ENCODE measurements at regions of chr16 and their contacts with region 1.

Region 1: DNA sequence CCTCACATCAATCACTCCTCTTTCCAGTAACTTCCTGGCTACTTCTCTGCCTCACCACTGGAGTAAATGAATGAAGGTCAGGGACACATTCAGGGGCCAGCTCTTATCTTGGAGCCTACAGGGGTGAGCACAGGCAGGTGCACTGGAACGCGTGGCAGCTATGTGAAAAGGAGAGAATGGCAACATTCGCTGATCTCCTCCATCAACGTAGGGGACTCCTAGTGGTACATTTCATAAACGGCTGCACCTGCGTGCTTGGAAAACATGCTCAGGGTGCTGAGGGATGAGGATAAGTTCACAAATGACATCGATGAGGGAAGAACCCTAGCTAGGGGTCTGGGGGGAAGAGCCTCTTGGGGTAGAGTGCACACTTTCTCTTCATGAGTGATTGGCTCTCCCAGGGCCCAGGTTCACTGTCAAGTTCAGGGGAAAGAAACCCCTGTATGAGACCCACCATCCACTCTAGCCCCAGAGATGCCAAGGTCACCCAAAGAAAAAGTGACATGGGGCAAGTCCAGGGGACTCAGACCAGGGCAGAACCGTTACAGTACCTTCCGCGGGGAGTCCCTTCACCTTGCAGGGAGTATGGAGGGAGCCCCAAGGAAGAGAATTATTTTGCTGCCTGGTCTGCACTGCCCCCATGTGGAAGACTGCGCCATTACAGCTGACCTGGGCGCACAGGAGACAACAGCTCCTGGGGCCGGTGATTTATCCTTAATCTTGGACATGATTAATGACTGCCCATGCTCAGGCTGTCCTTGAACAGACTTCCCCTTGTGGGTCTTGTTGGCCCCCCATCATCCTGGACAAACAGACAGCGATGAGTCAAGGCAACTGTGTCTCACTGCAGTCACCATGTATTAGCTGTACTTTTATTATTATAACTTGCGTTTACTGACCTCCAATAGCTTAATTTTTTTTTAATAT is 30.1 kb downstream of the VAC14 start:
- DNase-seq: no peak
- ATAC-seq: peak; percentile 97
- H3K4me3 ChIP-seq: no peak overlapping the region
- H3K27ac ChIP-seq: no peak overlapping the region
- H3K4me1 ChIP-seq: no peaks in the 10 kb centered on the region
- H3K27me3 ChIP-seq: no peaks in the 10 kb centered on the region
- CTCF ChIP-seq: peak; percentile 77 to 97 (median 91)
- EP300 ChIP-seq: no peak
- POLR2A ChIP-seq: no peak
- RAD21 ChIP-seq: peak; percentile 78

Region 2: GRCh38 chr16:70653809-70654771 is 116.8 kb before region 1 on chr16:
- CTCF ChIA-PET with region 1: interaction called, 18 read pairs
- POLR2A ChIA-PET with region 1: no interaction called
- RAD21 ChIA-PET with region 1: interaction called, 4 read pairs
- SMC1A ChIA-PET with region 1: interaction called, 6 read pairs
- in situ Hi-C with region 1: no loop called
- intact Hi-C with region 1: no loop called
- DNase-seq: peak; percentile 44
- ATAC-seq: peak; percentile 86
- H3K4me3 ChIP-seq: no peak overlapping the region
- H3K27ac ChIP-seq: no peak overlapping the region
- H3K4me1 ChIP-seq: no peaks in the 10 kb centered on the region
- H3K27me3 ChIP-seq: no peaks in the 10 kb centered on the region
- CTCF ChIP-seq: peak; percentile 80 to 97 (median 96); a peak in 5 of 6 replicates
- EP300 ChIP-seq: no peak
- POLR2A ChIP-seq: no peak
- RAD21 ChIP-seq: peak; percentile 93

Region 3: GRCh38 chr16:70737377-70738082 is 33.4 kb before region 1 on chr16:
- CTCF ChIA-PET with region 1: interaction called, 18 read pairs
- POLR2A ChIA-PET with region 1: interaction called, 4 read pairs
- RAD21 ChIA-PET with region 1: interaction called, 3 read pairs
- SMC1A ChIA-PET with region 1: interaction called, 5 read pairs
- in situ Hi-C with region 1: no loop called
- intact Hi-C with region 1: no loop called
- DNase-seq: peak; percentile 81
- ATAC-seq: peak; percentile 95
- H3K4me3 ChIP-seq: no peak overlapping the region
- H3K27ac ChIP-seq: peak overlapping the region; percentile 71
- H3K4me1 ChIP-seq: peaks cover 22% of the 10 kb centered on the region
- H3K27me3 ChIP-seq: no peaks in the 10 kb centered on the region
- CTCF ChIP-seq: no peak
- EP300 ChIP-seq: peak; percentile 73 to 83; a peak in 3 of 4 replicates
- POLR2A ChIP-seq: peak; percentile 64
- RAD21 ChIP-seq: no peak

Region 4: GRCh38 chr16:70784692-70785555 is 14.0 kb after region 1 on chr16:
- CTCF ChIA-PET with region 1: interaction called, 11 read pairs
- POLR2A ChIA-PET with region 1: interaction called, 7 read pairs
- RAD21 ChIA-PET with region 1: interaction called, 4 read pairs
- SMC1A ChIA-PET with region 1: interaction called, 4 read pairs
- in situ Hi-C with region 1: no loop called
- intact Hi-C with region 1: no loop called
- DNase-seq: no peak
- ATAC-seq: no peak
- H3K4me3 ChIP-seq: no peak overlapping the region
- H3K27ac ChIP-seq: no peak overlapping the region
- H3K4me1 ChIP-seq: no peaks in the 10 kb centered on the region
- H3K27me3 ChIP-seq: no peaks in the 10 kb centered on the region
- CTCF ChIP-seq: no peak
- EP300 ChIP-seq: no peak
- POLR2A ChIP-seq: no peak
- RAD21 ChIP-seq: no peak

Region 5: DNA sequence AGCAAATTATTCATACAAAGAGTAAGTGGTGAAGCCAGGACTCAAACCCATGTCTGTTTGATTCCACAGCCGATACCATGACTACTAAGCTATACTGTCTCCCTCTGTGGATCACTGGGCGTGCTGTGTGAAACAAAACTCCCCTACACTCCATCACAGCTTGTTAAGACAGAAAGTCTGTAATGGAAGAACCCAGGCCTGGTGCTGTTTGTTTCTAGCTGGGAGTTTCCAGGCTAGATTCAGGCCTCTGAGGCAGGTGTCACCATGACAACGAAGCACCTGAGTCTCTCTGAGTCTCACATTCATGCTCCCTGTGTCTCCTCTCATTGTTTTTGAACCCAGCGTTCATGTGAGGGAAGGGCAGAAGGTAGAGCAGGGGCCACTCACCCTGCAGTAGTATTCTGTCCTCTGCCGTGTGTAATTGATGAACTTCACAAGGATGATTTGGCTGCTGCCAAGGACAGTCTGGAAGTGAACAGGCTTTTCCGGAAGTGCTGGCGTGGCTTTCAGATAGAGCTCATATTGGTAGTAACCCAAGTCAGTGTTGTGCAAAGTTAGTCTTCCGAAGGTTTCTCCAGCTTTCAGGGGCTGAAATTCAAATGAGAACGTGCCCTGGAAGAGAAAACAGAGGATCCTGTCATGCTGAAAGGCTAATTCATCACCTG is 38.6 kb after region 1 on chr16:
- CTCF ChIA-PET with region 1: interaction called, 10 read pairs
- POLR2A ChIA-PET with region 1: no interaction called
- RAD21 ChIA-PET with region 1: interaction called, 3 read pairs
- SMC1A ChIA-PET with region 1: no interaction called
- in situ Hi-C with region 1: no loop called
- intact Hi-C with region 1: no loop called
- DNase-seq: no peak
- ATAC-seq: peak; percentile 91
- H3K4me3 ChIP-seq: no peak overlapping the region
- H3K27ac ChIP-seq: no peak overlapping the region
- H3K4me1 ChIP-seq: no peaks in the 10 kb centered on the region; the same call in 1 of the 2 replicates
- H3K27me3 ChIP-seq: no peaks in the 10 kb centered on the region
- CTCF ChIP-seq: no peak
- EP300 ChIP-seq: no peak
- POLR2A ChIP-seq: no peak
- RAD21 ChIP-seq: no peak

Region 6: DNA sequence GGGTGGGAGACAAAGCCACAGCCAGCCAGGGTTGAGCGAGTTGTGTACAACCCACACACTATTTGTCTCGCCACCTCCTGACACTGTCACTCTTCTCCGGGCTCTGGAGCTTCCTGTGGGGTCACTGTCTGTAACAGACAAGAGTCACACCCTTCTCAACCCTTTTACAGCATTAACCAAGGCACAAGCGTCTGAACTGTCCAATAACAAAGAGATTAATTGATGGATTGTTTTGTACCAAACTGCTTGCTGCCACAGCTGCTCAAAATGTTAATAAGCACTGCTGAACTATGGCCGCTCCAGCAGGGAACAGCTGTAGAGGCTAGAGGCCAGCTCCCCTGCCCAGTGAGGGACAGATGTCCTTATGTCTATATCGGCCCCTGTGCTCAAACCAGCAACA is 484.8 kb after region 1 on chr16:
- CTCF ChIA-PET with region 1: no interaction called
- POLR2A ChIA-PET with region 1: no interaction called
- RAD21 ChIA-PET with region 1: no interaction called
- SMC1A ChIA-PET with region 1: no interaction called
- in situ Hi-C with region 1: no loop called
- intact Hi-C with region 1: no loop called
- DNase-seq: no peak
- ATAC-seq: peak; percentile 27; the same call in 2 of the 3 replicates
- H3K4me3 ChIP-seq: no peak overlapping the region
- H3K27ac ChIP-seq: no peak overlapping the region
- H3K4me1 ChIP-seq: no peaks in the 10 kb centered on the region
- H3K27me3 ChIP-seq: no peaks in the 10 kb centered on the region
- CTCF ChIP-seq: no peak
- EP300 ChIP-seq: no peak
- POLR2A ChIP-seq: no peak
- RAD21 ChIP-seq: no peak